A549 (cell line): ENCODE measurements at regions of chr17 and their contacts with region 1.

Region 1: DNA sequence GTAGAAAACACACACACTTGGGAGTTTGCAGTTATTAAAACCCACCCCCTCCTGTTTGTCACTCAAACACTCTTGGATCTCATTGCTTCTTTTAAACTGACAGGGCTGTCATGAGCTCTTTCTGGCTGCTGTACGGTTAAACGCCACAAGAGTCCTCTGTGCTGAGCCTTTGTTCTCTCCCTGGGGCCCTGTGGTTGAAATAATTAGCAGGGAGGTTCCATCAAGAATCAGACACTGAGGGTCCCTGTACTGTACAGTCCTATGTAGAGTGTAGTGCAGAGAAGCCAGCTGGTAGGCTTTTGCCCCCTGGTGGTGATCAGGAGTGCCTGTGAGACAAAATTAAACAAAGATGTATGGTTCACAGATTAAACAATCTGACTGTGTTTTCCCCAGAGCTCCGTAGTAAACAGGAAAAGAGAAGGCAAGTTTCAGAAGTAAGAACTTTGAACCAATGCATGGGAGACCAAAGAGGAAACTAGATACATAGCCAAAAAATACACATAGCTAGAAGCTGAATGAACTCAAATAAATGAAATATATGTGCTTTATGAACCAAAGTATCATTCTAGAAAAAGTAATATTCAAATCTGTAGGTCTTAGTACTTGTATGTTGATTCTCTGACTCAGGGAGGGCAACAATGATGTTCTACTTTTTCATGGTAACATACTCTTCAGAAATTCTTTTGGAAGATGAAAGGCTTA is 1.4 kb upstream of the SSH2 start:
- DNase-seq: peak; percentile 67 to 85
- ATAC-seq: peak; percentile 60 to 75
- H3K4me3 ChIP-seq: peak overlapping the region; percentile 78
- H3K27ac ChIP-seq: peak overlapping the region; percentile 91 to 95; a peak in 4 of 6 replicates
- H3K4me1 ChIP-seq: peaks cover 31% of the 10 kb centered on the region
- CTCF ChIP-seq: peak; percentile 99
- EP300 ChIP-seq: no peak
- POLR2A ChIP-seq: no peak
- RAD21 ChIP-seq: peak; percentile 91 to 93

Region 2: DNA sequence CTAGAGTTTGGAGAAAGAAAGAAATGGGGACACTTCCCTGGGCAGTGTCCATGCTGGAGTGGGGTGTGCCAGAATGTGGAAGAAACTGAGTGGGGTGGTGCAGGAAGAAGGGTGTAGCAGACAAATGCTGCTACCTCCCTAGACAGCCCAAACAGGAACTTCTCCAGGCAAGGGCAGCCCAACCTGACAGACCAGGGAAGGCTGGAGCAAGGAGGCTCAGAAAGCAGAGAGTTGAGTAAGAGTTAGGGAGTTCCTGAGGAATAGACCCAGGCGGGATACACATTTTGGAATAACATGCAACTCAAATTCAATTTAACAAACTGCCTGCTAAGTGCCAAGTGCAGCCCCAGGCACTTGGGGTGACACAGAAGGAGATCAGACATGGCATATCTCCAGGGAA is 750.2 kb before region 1 on chr17:
- CTCF ChIA-PET with region 1: no interaction called
- POLR2A ChIA-PET with region 1: no interaction called
- DNase-seq: no peak
- ATAC-seq: no peak
- H3K4me3 ChIP-seq: no peak overlapping the region
- H3K27ac ChIP-seq: peak overlapping the region in 1 of 2 experiments; percentile 95; a peak in 3 of 6 replicates
- H3K4me1 ChIP-seq: peaks cover 31% of the 10 kb centered on the region
- CTCF ChIP-seq: no peak
- EP300 ChIP-seq: no peak
- POLR2A ChIP-seq: no peak
- RAD21 ChIP-seq: no peak

Region 3: GRCh38 chr17:29653995-29654714 is 277.2 kb before region 1 on chr17:
- CTCF ChIA-PET with region 1: interaction called, 15 read pairs
- POLR2A ChIA-PET with region 1: no interaction called
- DNase-seq: no peak
- ATAC-seq: no peak
- H3K4me3 ChIP-seq: no peak overlapping the region
- H3K27ac ChIP-seq: no peak overlapping the region
- H3K4me1 ChIP-seq: no peaks in the 10 kb centered on the region
- CTCF ChIP-seq: no peak
- EP300 ChIP-seq: no peak
- POLR2A ChIP-seq: no peak
- RAD21 ChIP-seq: no peak

Region 4: GRCh38 chr17:29838961-29839360 is 92.4 kb before region 1 on chr17:
- CTCF ChIA-PET with region 1: interaction called, 20 read pairs
- POLR2A ChIA-PET with region 1: no interaction called
- DNase-seq: peak in 1 of 2 experiments; percentile 16
- ATAC-seq: peak in 1 of 2 experiments; percentile 47; a peak in 3 of 6 replicates
- H3K4me3 ChIP-seq: no peak overlapping the region
- H3K27ac ChIP-seq: no peak overlapping the region
- H3K4me1 ChIP-seq: peaks cover 17% of the 10 kb centered on the region; the same call in 2 of the 3 replicates
- CTCF ChIP-seq: no peak
- EP300 ChIP-seq: no peak
- POLR2A ChIP-seq: no peak
- RAD21 ChIP-seq: no peak

Region 5: GRCh38 chr17:29867643-29868181 is 63.7 kb before region 1 on chr17:
- CTCF ChIA-PET with region 1: interaction called, 32 read pairs
- POLR2A ChIA-PET with region 1: no interaction called
- DNase-seq: no peak
- ATAC-seq: peak; percentile 34 to 50; a peak in 1 of 6 replicates
- H3K4me3 ChIP-seq: no peak overlapping the region
- H3K27ac ChIP-seq: no peak overlapping the region
- H3K4me1 ChIP-seq: no peaks in the 10 kb centered on the region
- CTCF ChIP-seq: peak; percentile 48
- EP300 ChIP-seq: no peak
- POLR2A ChIP-seq: no peak
- RAD21 ChIP-seq: peak; percentile 31 to 41; a peak in 2 of 5 replicates

Region 6: DNA sequence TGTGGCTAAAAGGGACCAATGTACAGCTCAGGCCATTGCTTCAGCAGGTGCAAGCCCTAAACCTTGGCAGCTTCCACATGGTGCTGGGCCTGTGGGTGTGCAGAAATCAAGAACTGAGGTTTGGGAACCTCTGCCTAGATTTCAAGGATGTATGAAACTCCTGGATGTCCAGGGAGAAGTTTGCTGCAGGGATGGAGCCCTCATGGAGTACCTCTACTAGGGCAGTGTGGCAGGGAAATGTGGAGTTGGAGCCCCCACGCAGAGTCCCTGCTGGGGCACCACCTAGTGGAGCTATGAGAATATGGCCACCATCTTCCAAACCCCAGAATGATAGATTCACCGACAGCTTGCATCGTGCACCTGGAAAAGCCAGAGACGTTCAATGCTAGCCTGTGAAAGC is 23.0 kb after region 1 on chr17:
- CTCF ChIA-PET with region 1: interaction called, 77 read pairs
- POLR2A ChIA-PET with region 1: no interaction called
- DNase-seq: no peak
- ATAC-seq: no peak
- H3K4me3 ChIP-seq: no peak overlapping the region
- H3K27ac ChIP-seq: no peak overlapping the region
- H3K4me1 ChIP-seq: peaks cover 10% of the 10 kb centered on the region
- CTCF ChIP-seq: no peak
- EP300 ChIP-seq: no peak
- POLR2A ChIP-seq: no peak
- RAD21 ChIP-seq: 0 out of 5 replicates have a peak, but pooled peaks of 1 of the 2 experiments have one; percentile 11

Region 7: GRCh38 chr17:30062372-30062771 is 131.0 kb after region 1 on chr17:
- CTCF ChIA-PET with region 1: interaction called, 12 read pairs
- POLR2A ChIA-PET with region 1: interaction called, 4 read pairs
- DNase-seq: no peak
- ATAC-seq: no peak
- H3K4me3 ChIP-seq: no peak overlapping the region
- H3K27ac ChIP-seq: no peak overlapping the region
- H3K4me1 ChIP-seq: no peaks in the 10 kb centered on the region
- CTCF ChIP-seq: no peak
- EP300 ChIP-seq: no peak
- POLR2A ChIP-seq: no peak
- RAD21 ChIP-seq: no peak